IMR-90 (cell line): ENCODE measurements at regions of chr11 and their contacts with region 1.

Region 1: GRCh38 chr11:134207538-134208239 is 16.1 kb downstream of the NCAPD3 start:
- DNase-seq: no peak
- ATAC-seq: no peak
- H3K4me3 ChIP-seq: no peak overlapping the region
- H3K27ac ChIP-seq: no peak overlapping the region
- H3K4me1 ChIP-seq: no peaks in the 10 kb centered on the region
- H3K27me3 ChIP-seq: no peaks in the 10 kb centered on the region
- CTCF ChIP-seq: peak; percentile 35
- POLR2A ChIP-seq: no peak
- RAD21 ChIP-seq: peak; percentile 27

Region 2: GRCh38 chr11:134253188-134253993 is 45.7 kb after region 1 on chr11 and contains the starts of genes ACAD8 and THYN1:
- CTCF ChIA-PET with region 1: interaction called, 4 read pairs
- POLR2A ChIA-PET with region 1: no interaction called
- dilution Hi-C with region 1: no loop called
- in situ Hi-C with region 1: no loop called
- intact Hi-C with region 1: loop called (anchors 1 kb)
- DNase-seq: peak; percentile 95
- ATAC-seq: peak; percentile 99
- H3K4me3 ChIP-seq: peak within 1 kb of the TSS; percentile 61
- H3K27ac ChIP-seq: peak within 1 kb of the TSS; percentile 41
- H3K4me1 ChIP-seq: no peaks in the 10 kb centered on the region; the same call in 1 of the 2 replicates
- H3K27me3 ChIP-seq: no peaks in the 10 kb centered on the region
- CTCF ChIP-seq: no peak
- POLR2A ChIP-seq: 0 out of 2 replicates have a peak, but pooled peaks have one; percentile 22
- RAD21 ChIP-seq: no peak
- total RNA-seq, gene ACAD8: 9.7 and 11.1 TPM in 2 replicates
- total RNA-seq, gene THYN1: 51.9 and 72.1 TPM in 2 replicates

Region 3: DNA sequence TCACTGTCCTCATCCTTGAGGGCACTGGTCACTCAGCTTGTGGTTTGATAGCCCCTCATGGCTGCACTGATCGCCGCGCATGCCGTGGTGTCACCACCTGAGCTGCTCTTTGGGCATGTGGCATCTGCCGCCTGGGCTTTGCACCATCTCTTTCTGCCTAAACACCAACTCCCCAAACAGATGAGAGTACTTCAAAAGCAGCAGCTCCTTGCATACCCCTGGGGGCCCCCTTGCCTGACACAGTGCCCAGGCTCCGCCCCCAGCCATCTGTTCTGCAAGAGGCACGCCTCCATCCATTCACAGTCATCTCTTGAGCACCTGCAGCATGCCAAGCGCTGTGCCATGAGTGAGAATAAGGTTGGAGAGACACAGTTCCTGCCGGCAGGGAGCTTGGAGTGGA is 308.8 kb after region 1 on chr11:
- CTCF ChIA-PET with region 1: no interaction called
- POLR2A ChIA-PET with region 1: no interaction called
- dilution Hi-C with region 1: no loop called
- in situ Hi-C with region 1: no loop called
- intact Hi-C with region 1: no loop called
- DNase-seq: no peak
- ATAC-seq: no peak
- H3K4me3 ChIP-seq: no peak overlapping the region
- H3K27ac ChIP-seq: no peak overlapping the region
- H3K4me1 ChIP-seq: no peaks in the 10 kb centered on the region
- H3K27me3 ChIP-seq: no peaks in the 10 kb centered on the region
- CTCF ChIP-seq: no peak
- POLR2A ChIP-seq: no peak
- RAD21 ChIP-seq: no peak